ENCODE measurements at regions of chr7 and their contacts with region 1.

Region 1: GRCh38 chr7:151448261-151449252 is 8.6 kb upstream of the CRYGN start:
- DNase-seq: peak; percentile 84
- ATAC-seq: peak; percentile 90
- H3K4me3 Mint-ChIP-seq: peak overlapping the region; percentile 49
- H3K27ac Mint-ChIP-seq: no peak overlapping the region
- H3K4me1 Mint-ChIP-seq: peaks cover 6% of the 10 kb centered on the region
- H3K27me3 Mint-ChIP-seq: peaks cover 28% of the 10 kb centered on the region

Region 2: DNA sequence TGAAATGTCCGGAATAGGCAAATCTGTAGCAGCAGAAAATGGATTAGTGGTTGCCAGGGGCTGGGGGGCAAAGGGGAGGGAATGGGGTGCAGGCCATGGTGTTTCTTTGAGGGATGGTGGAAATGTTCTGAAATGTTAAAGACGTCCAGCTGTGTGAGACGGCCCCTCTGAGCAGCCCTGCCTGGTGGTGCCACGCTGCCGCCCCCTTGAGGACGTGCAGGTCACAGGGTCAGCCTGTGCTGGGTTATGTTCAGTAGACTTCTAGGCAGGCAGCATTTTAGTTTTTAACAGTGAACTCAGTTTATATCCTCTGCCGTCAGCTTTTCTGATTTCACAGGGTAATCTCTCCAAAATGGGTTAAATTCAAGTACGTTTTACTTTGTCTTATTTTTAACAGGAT is 97.5 kb before region 1 on chr7:
- CTCF ChIA-PET with region 1: interaction called, 52 read pairs
- DNase-seq: peak; percentile 78
- ATAC-seq: peak; percentile 32
- H3K4me3 Mint-ChIP-seq: peak overlapping the region; percentile 83
- H3K27ac Mint-ChIP-seq: peak overlapping the region; percentile 93
- H3K4me1 Mint-ChIP-seq: peaks cover 49% of the 10 kb centered on the region
- H3K27me3 Mint-ChIP-seq: no peaks in the 10 kb centered on the region

Region 3: GRCh38 chr7:151368136-151368571 is 80.4 kb before region 1 on chr7:
- CTCF ChIA-PET with region 1: interaction called, 151 read pairs
- DNase-seq: peak; percentile 84
- ATAC-seq: peak; percentile 99
- H3K4me3 Mint-ChIP-seq: no peak overlapping the region
- H3K27ac Mint-ChIP-seq: no peak overlapping the region
- H3K4me1 Mint-ChIP-seq: peaks cover 13% of the 10 kb centered on the region
- H3K27me3 Mint-ChIP-seq: no peaks in the 10 kb centered on the region

Region 4: GRCh38 chr7:151410405-151411390 is 37.9 kb before region 1 on chr7:
- CTCF ChIA-PET with region 1: interaction called, 11 read pairs
- DNase-seq: no peak
- ATAC-seq: no peak
- H3K4me3 Mint-ChIP-seq: no peak overlapping the region
- H3K27ac Mint-ChIP-seq: no peak overlapping the region
- H3K4me1 Mint-ChIP-seq: peaks cover 19% of the 10 kb centered on the region
- H3K27me3 Mint-ChIP-seq: peaks cover 59% of the 10 kb centered on the region

Region 5: DNA sequence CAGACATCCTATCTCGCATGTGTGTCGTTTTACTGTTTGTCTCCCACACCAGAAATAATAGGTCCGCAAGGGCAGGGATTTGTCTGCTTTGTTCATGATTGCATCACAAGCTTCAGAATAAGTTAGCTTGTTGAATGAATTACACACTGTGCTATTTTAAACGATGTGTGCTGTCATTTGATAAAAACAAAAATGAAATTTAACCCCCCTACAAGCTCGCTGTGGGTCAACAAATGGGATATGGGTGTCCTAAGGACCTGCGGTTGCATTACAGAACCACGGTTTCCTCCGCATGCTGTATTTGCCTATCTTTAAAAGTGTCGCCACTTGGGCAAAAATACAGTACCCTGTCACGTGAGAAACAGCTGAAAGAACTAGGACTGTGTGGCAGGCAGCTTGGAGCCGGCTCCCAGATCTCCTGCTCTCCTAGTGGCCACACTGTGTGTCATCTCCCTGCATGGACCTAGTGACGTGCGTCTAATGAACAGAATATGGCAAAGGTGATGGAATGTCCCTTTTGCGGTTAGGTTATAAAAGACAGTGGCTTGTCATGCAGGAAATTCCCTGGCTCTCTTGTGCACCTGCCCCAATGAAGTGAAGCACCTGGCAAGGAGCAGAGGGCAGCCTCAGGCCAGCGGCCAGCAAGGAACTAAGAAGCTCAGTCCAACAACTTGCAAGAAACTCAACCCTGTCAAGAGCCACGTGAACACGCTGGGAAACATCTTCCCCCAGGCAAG is 24.3 kb after region 1 on chr7:
- CTCF ChIA-PET with region 1: interaction called, 11 read pairs
- DNase-seq: no peak
- ATAC-seq: no peak
- H3K4me3 Mint-ChIP-seq: peak overlapping the region; percentile 23
- H3K27ac Mint-ChIP-seq: peak overlapping the region; percentile 69
- H3K4me1 Mint-ChIP-seq: peaks cover 44% of the 10 kb centered on the region
- H3K27me3 Mint-ChIP-seq: no peaks in the 10 kb centered on the region

Measured in activated CD8-positive, alpha-beta memory T cell treated with anti-CD3 and anti-CD28 coated beads, Interleukin-2, amount 10 ng/mL, durations not matched to agents 7 days and 5 days (primary cell).